ENCODE measurements at regions of chr5 and their contacts with region 1.

Region 1: DNA sequence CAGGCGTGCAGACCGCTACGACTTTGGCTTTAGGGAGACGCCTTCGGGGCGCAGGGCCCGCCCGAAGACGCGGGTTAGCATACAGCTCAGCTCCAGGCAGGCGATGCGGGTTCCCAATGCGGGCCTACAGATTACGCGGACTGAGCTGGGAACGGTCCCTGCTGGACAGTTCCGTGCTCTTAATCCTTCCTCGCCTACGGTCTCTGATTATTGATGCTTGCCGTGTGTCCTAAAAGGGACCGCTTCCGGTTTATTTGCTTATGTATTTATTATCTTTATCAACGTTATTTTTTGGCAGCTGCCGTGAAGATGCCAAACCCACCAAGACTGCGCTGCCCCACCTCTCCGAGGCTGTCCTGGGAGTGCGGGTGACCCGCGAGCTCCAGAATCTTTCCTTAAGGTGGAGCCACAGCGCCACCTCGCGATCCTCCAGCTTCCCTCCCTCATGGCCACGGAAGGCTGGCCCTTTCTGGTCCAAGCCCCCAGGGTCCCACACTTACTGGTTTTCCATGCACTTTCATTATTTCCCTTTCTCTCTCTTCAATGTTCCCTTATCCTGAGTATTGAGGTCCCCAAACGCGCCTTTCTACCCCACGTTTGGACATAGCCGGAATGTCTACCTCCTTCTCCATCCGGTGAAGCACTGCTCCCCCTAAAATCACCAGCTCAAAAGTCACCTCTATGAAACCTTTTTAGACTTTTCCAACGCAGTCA is 7.0 kb upstream of the EBF1 start:
- DNase-seq: peak; percentile 87
- ATAC-seq: peak; percentile 88 to 92

Region 2: DNA sequence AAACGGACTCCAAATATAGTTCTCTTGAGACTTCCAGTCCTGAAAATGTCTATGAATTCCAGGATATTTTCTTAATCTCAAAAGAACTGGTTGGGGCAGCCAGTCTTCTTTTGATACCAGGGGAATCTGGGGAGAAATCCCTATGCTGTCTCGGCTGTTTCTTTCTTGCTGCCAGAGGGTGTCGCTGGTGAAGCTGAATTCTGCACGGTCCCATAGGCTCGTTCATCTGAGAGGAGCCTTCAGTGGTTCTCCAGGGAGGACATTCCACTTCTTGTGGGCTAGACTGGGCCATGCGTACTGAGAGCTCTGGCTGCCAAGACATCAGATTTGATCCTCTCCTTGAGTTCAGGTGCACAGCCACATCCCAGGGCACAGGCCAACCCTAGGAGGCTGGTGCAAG is 1092.8 kb before region 1 on chr5:
- intact Hi-C with region 1: loop called in 1 of 2 experiments (anchors 10 kb)
- DNase-seq: no peak
- ATAC-seq: peak; percentile 71 to 74

Region 3: DNA sequence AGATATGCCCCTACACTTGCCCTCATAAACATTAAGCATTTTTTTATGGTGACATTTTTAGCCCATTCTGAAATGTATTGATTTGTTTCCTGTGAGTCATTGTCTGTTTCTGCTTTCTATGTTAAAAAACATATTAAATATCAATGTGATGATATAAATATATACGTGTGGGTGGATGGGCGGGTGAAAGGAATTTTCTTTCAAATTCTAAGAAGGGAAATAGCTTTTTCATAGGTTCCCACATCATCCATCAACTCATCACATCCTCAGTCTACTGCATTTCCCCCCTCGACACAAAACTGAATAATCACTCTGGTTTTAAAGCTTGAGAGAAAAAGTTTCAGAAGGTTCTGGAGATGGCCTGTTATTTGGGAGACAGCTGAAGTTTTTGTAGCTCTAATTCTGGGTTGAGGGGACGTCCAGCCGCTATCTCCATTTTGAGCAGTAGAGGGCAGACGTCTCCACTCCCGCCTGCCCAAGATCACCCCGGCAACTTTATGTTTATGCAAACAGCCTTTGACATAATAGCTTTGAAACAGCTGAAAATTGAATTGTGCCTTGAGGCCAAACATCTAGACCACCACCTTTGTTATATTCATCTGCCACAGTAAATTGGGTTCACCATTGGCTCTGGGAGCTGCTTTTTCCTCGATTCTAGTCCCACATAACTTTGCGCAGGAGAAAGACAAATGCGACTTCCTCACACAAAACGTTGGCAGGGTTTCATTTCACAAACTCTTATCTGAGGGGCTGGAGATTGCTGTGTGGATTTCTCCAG is 1031.5 kb before region 1 on chr5:
- intact Hi-C with region 1: loop called in 1 of 2 experiments (anchors 5 kb)
- DNase-seq: peak; percentile 54
- ATAC-seq: peak; percentile 89 to 92

Region 4: DNA sequence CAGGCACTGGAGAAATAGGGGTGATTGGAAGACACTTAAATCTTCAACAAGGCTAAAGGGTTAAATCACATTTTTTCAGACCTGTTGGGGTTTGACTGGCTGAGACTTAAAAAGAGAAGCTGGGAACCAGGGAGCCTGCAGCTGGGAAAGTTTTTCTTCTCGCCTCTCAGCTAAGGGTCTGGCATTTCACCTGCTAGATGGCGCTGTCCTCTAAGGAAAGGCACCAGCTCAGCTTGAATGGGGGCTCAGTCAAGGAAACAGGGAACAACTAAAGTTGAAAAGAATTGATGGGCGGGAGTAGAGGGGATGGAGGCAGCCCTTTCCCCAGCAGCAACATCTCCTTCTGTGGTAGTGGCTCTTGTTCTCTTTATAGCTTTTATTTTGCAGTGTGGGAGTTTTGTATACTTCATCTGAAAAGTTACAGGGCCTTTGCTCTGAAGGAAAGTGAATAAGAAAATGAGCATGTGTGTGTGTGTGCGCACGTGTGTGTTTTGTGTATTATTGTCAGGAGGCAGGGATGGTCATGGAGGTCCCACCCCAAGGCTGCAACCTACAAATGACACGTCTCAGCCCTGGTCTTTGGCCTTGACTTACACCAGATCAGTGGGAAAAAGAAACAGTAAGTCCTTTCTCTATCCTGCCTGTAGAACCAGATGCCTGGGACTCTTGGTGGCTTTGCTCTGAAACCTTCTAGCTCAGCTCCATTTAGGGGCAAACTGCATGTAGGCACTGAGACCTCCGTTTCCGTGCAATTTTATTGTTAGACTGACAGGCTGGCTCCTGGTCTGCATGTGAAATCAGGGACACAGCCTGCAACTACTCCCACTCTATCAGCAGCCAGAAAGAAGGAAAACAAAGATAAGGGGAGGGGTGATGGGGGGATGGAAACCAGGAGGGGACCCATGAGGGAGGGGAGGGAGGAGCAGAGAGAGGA is 931.5 kb before region 1 on chr5:
- intact Hi-C with region 1: loop called in 1 of 2 experiments (anchors 2 kb)
- DNase-seq: peak; percentile 73
- ATAC-seq: peak; percentile 89 to 93

Region 5: GRCh38 chr5:158521995-158522394 is 584.7 kb before region 1 on chr5:
- intact Hi-C with region 1: loop called in 1 of 2 experiments (anchors 10 kb)
- DNase-seq: no peak
- ATAC-seq: peak in 1 of 2 donors; percentile 73

Region 6: DNA sequence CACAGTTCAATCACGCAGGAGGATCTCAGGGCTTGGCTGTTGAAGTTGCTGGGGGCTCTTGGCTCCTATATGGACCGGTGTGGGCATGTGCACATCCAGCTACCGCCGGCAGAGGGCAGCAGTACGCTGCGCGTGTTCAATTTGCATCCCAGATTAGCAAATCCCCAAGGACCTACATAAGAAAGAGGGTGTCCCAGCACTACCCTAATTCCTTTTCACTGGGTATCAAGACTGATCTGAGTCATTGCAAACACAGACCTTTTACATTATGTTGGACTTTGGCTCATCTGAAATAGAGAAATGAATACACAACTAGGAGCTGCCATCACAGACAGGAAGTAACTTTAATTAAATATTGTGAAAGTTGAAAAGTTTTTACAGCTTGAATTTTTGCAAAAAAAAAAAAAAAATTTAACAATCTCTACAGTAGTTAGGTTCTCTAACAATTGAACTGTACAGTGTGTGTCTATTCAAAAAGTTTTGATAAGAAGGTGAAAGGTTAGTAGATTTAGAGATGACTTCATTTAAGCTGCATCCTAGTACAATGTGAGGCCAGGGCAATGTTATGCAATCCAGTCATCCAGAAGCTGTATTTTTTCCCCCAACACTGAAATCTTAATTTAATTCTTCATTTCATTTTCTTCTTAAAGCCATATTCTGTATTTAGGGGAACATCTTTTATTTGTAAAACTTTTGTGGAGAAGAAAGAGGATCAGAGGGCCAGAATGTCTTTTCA is 411.0 kb before region 1 on chr5:
- intact Hi-C with region 1: loop called (anchors 2 to 5 kb)
- DNase-seq: peak; percentile 71
- ATAC-seq: peak; percentile 65 to 86

Measured in left cardiac atrium (tissue), 4 donors.